Mammary epithelial cell (primary cell): ENCODE measurements at regions of chr3 and their contacts with region 1.

Region 1: GRCh38 chr3:85406499-85406898 is 447.7 kb downstream of the CADM2 start:
- DNase-seq: no peak
- H3K4me3 ChIP-seq: no peak overlapping the region
- H3K27ac ChIP-seq: no peak overlapping the region
- H3K4me1 ChIP-seq: no peaks in the 10 kb centered on the region
- H3K27me3 ChIP-seq: no peaks in the 10 kb centered on the region
- CTCF ChIP-seq: no peak

Region 2: GRCh38 chr3:85304359-85304964 is 102.0 kb before region 1 on chr3:
- CTCF ChIA-PET with region 1: no interaction called
- dilution Hi-C with region 1: no loop called
- in situ Hi-C with region 1: no loop called
- intact Hi-C with region 1: no loop called
- DNase-seq: peak; percentile 1
- H3K4me3 ChIP-seq: no peak overlapping the region
- H3K27ac ChIP-seq: no peak overlapping the region
- H3K4me1 ChIP-seq: no peaks in the 10 kb centered on the region
- H3K27me3 ChIP-seq: peaks cover 3% of the 10 kb centered on the region
- CTCF ChIP-seq: peak; percentile 34 to 45

Region 3: DNA sequence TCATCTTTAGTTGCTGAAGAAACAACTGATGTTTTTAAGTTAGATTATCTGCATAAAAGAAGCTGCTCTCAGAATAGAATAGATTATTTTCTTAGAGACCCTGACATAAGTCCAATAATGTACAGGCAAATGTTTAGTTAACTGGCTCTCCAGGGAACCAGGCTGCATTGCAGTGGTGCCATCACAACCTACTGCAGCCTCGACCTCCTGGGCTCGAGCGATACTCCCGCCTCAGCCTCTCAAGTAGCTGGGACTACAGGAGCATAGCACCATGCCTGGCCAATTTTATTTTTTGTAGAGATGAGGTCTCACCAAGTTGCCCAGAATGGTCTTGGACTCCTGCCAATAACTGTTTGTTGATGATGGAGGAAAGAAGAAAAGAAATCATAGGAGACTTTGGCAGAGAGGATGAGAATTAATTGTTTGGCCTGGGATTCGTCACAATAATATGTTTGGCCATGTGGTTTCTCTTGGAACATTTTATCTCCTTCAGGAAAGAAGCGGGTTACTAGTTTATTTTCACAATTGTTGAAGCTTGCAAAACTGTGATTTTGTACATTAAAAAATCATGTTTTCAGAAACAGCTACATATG is 18.5 kb before region 1 on chr3:
- CTCF ChIA-PET with region 1: interaction called, 13 read pairs
- dilution Hi-C with region 1: no loop called
- in situ Hi-C with region 1: no loop called
- intact Hi-C with region 1: no loop called
- DNase-seq: no peak
- H3K4me3 ChIP-seq: no peak overlapping the region
- H3K27ac ChIP-seq: no peak overlapping the region
- H3K4me1 ChIP-seq: no peaks in the 10 kb centered on the region
- H3K27me3 ChIP-seq: no peaks in the 10 kb centered on the region
- CTCF ChIP-seq: no peak

Region 4: GRCh38 chr3:85455561-85456196 is 49.2 kb after region 1 on chr3:
- CTCF ChIA-PET with region 1: no interaction called
- dilution Hi-C with region 1: no loop called
- in situ Hi-C with region 1: no loop called
- intact Hi-C with region 1: no loop called
- DNase-seq: no peak
- H3K4me3 ChIP-seq: no peak overlapping the region
- H3K27ac ChIP-seq: no peak overlapping the region
- H3K4me1 ChIP-seq: no peaks in the 10 kb centered on the region
- H3K27me3 ChIP-seq: peaks cover 4% of the 10 kb centered on the region
- CTCF ChIP-seq: no peak

Region 5: GRCh38 chr3:85864896-85865295 is 458.4 kb after region 1 on chr3:
- CTCF ChIA-PET with region 1: no interaction called
- dilution Hi-C with region 1: no loop called
- in situ Hi-C with region 1: no loop called
- intact Hi-C with region 1: loop called (anchors 5 kb)
- DNase-seq: no peak
- H3K4me3 ChIP-seq: no peak overlapping the region
- H3K27ac ChIP-seq: no peak overlapping the region
- H3K4me1 ChIP-seq: no peaks in the 10 kb centered on the region
- H3K27me3 ChIP-seq: no peaks in the 10 kb centered on the region
- CTCF ChIP-seq: no peak